ENCODE measurements at regions of chr3 and their contacts with region 1.

Region 1: DNA sequence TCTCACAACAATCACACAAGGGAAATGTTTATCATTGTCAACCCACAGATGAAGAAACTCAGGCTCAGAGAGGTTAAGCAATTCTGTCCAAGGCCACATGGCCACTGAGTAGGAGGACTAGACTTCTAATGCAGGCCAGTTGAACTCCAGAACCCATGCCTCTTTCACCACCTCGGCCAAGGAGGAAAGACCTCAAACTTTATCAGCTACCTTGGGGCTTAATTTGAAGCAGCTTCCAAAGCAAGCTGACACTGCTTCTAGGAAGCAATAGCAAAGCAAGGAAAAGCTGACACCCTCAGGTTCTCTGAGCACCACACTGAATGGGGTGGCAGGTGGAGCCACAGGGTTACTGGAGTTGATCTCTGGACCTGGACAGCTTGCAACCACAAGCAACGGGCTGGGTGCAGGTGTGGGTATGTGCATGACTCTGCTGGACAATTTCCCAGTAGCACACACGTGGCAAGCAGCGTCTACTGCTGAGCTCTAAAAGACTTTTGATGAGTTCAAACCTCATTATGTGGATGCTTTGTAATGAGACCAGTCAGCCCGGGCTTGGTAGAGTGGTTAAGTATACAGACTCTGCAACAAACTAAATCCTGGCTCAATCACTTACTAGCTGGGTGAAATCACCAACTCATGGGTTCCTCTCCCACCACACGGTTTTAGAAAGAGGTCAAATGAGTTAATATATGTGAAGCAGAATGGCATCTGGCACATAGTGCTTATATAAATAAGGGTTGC is 23.1 kb downstream of the CCNL1 start:
- DNase-seq: no peak
- ATAC-seq: no peak
- H3K4me3 ChIP-seq: no peak overlapping the region
- H3K4me3 Mint-ChIP-seq: no peak overlapping the region
- H3K27ac ChIP-seq: peak overlapping the region in 1 of 2 donors; percentile 14
- H3K27ac Mint-ChIP-seq: no peak overlapping the region
- H3K4me1 ChIP-seq: peaks cover 4 to 7% of the 10 kb centered on the region in 2 donors
- H3K4me1 Mint-ChIP-seq: peaks cover 6% of the 10 kb centered on the region
- H3K27me3 ChIP-seq: no peaks in the 10 kb centered on the region
- H3K27me3 Mint-ChIP-seq: no peaks in the 10 kb centered on the region
- CTCF ChIP-seq: no peak

Region 2: DNA sequence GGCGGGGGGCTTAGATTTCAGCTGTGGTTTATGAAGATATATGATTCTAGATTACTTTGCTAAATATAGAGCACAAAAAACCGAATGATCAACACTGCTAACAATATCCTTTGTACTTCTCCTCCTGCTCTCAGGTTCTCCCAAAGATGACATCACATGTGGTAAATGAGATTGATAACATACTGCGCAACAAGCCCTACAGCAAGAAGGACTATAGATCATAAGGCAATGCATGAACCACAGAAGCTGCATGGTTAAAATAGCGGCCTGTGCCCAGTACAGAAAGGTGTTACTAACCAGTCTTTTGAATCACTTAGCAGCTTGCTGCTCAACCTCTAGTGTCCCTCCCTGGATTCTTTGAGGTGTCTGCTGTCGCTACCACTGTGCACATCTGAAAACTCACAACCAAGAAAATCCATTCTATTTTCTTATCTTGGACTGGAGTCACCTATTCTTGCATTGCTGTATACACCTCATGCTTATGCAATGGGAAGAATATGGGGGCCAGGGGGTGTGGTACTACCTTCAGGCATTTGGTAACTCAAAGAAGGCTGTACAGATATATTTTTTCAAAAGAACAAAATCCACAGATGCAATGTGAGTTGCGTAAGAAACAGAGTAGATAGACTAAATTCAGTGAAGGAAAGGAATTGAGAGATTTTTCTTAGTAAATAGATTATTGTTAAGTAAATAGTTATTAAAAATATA is 600.1 kb before region 1 on chr3:
- CTCF ChIA-PET with region 1: interaction called, 3 read pairs
- POLR2A ChIA-PET with region 1: no interaction called
- intact Hi-C with region 1: loop called (anchors 1 kb)
- DNase-seq: no peak
- ATAC-seq: no peak
- H3K4me3 ChIP-seq: no peak overlapping the region
- H3K4me3 Mint-ChIP-seq: no peak overlapping the region
- H3K27ac ChIP-seq: no peak overlapping the region
- H3K27ac Mint-ChIP-seq: no peak overlapping the region
- H3K4me1 ChIP-seq: no peaks in the 10 kb centered on the region
- H3K4me1 Mint-ChIP-seq: no peaks in the 10 kb centered on the region
- H3K27me3 ChIP-seq: no peaks in the 10 kb centered on the region
- H3K27me3 Mint-ChIP-seq: no peaks in the 10 kb centered on the region
- CTCF ChIP-seq: no peak

Region 3: DNA sequence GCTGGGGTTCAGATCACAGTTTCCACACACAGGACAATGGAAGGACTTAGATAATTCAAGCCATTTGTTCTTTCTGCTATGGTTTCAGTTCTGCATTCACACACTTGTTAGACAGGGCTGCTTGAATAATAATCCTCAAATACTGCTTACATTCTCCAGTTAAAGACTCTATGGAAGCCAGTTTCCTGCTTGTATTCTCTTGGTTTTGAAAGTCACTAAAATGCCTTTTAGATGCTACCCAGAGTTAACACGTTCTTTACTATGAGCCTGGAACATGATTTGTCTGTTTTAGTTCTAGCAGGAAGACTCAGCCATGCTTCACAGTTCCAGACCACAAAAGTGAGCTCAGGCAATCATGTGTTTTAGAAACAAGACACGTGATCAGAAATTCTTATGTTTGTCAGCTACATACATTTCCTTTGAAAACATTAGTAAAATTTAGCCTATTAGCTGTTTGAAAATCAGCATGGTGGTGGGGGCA is 158.3 kb before region 1 on chr3:
- CTCF ChIA-PET with region 1: interaction called, 3 read pairs
- POLR2A ChIA-PET with region 1: no interaction called
- intact Hi-C with region 1: loop called (anchors 1 kb)
- DNase-seq: peak; percentile 87
- ATAC-seq: peak; percentile 86
- H3K4me3 ChIP-seq: peak overlapping the region in 3 of 5 experiments; percentile 0 to 53 (median 5)
- H3K4me3 Mint-ChIP-seq: peak overlapping the region; percentile 74
- H3K27ac ChIP-seq: peak overlapping the region; percentile 74 to 93
- H3K27ac Mint-ChIP-seq: peak overlapping the region; percentile 97
- H3K4me1 ChIP-seq: peaks cover 36 to 43% of the 10 kb centered on the region in 2 donors
- H3K4me1 Mint-ChIP-seq: peaks cover 51% of the 10 kb centered on the region
- H3K27me3 ChIP-seq: no peaks in the 10 kb centered on the region
- H3K27me3 Mint-ChIP-seq: no peaks in the 10 kb centered on the region
- CTCF ChIP-seq: no peak

Region 4: GRCh38 chr3:157088601-157089454 is 48.0 kb before region 1 on chr3:
- CTCF ChIA-PET with region 1: interaction called, 51 read pairs
- POLR2A ChIA-PET with region 1: interaction called, 3 read pairs
- intact Hi-C with region 1: loop called (anchors 1 kb)
- DNase-seq: peak; percentile 96
- ATAC-seq: peak; percentile 91
- H3K4me3 ChIP-seq: peak overlapping the region; percentile 56 to 92 (median 80)
- H3K4me3 Mint-ChIP-seq: peak overlapping the region; percentile 94
- H3K27ac ChIP-seq: peak overlapping the region; percentile 76 to 98
- H3K27ac Mint-ChIP-seq: peak overlapping the region; percentile 98
- H3K4me1 ChIP-seq: peaks cover 19 to 25% of the 10 kb centered on the region in 2 donors
- H3K4me1 Mint-ChIP-seq: peaks cover 25% of the 10 kb centered on the region
- H3K27me3 ChIP-seq: peaks cover 0 to 2% (median 0%) of the 10 kb centered on the region in 4 experiments
- H3K27me3 Mint-ChIP-seq: peaks cover 8% of the 10 kb centered on the region
- CTCF ChIP-seq: no peak

Region 5: GRCh38 chr3:157122116-157122515 is 14.7 kb before region 1 on chr3:
- CTCF ChIA-PET with region 1: interaction called, 45 read pairs
- POLR2A ChIA-PET with region 1: interaction called, 3 read pairs
- intact Hi-C with region 1: no loop called
- DNase-seq: no peak
- ATAC-seq: no peak
- H3K4me3 ChIP-seq: no peak overlapping the region
- H3K4me3 Mint-ChIP-seq: no peak overlapping the region
- H3K27ac ChIP-seq: no peak overlapping the region
- H3K27ac Mint-ChIP-seq: no peak overlapping the region
- H3K4me1 ChIP-seq: no peaks in the 10 kb centered on the region
- H3K4me1 Mint-ChIP-seq: no peaks in the 10 kb centered on the region
- H3K27me3 ChIP-seq: no peaks in the 10 kb centered on the region
- H3K27me3 Mint-ChIP-seq: peaks cover 10% of the 10 kb centered on the region
- CTCF ChIP-seq: no peak

Measured in B cell (primary cell).